Activated B cell treated with CpG ODN at 0.5 μM for 24 hours (primary cell): ENCODE measurements at regions of chr1 and their contacts with region 1.

Region 1: GRCh38 chr1:108746372-108747205 is at the start of gene STXBP3:
- DNase-seq: peak; percentile 99
- ATAC-seq: peak; percentile 92
- H3K4me3 Mint-ChIP-seq: peak within 1 kb of the TSS; percentile 99
- H3K27ac Mint-ChIP-seq: peak within 1 kb of the TSS; percentile 99
- H3K4me1 Mint-ChIP-seq: peaks cover 28% of the 10 kb centered on the region
- H3K27me3 Mint-ChIP-seq: no peaks in the 10 kb centered on the region
- CTCF ChIP-seq: peak; percentile 93
- total RNA-seq, gene STXBP3: 46.4 and 50.2 TPM in 2 replicates

Region 2: GRCh38 chr1:108199781-108200570 is 546.6 kb before region 1 on chr1 and contains the start of gene SLC25A24:
- CTCF ChIA-PET with region 1: no interaction called
- POLR2A ChIA-PET with region 1: no interaction called
- intact Hi-C with region 1: loop called (anchors 5 kb)
- DNase-seq: peak; percentile 85
- ATAC-seq: peak; percentile 94
- H3K4me3 Mint-ChIP-seq: peak within 1 kb of the TSS; percentile 93
- H3K27ac Mint-ChIP-seq: peak within 1 kb of the TSS; percentile 86
- H3K4me1 Mint-ChIP-seq: peaks cover 29% of the 10 kb centered on the region
- H3K27me3 Mint-ChIP-seq: no peaks in the 10 kb centered on the region
- CTCF ChIP-seq: no peak
- total RNA-seq, gene SLC25A24: 20.2 and 22.1 TPM in 2 replicates

Region 3: GRCh38 chr1:108877348-108878159 is 131.0 kb after region 1 on chr1:
- CTCF ChIA-PET with region 1: no interaction called
- POLR2A ChIA-PET with region 1: no interaction called
- intact Hi-C with region 1: loop called (anchors 1 kb)
- DNase-seq: no peak
- ATAC-seq: no peak
- H3K4me3 Mint-ChIP-seq: peak overlapping the region; percentile 97
- H3K27ac Mint-ChIP-seq: peak overlapping the region; percentile 85
- H3K4me1 Mint-ChIP-seq: peaks cover 13% of the 10 kb centered on the region
- H3K27me3 Mint-ChIP-seq: no peaks in the 10 kb centered on the region
- CTCF ChIP-seq: no peak

Region 4: GRCh38 chr1:108963052-108963686 is 216.6 kb after region 1 on chr1 and contains the start of gene CLCC1:
- CTCF ChIA-PET with region 1: no interaction called
- POLR2A ChIA-PET with region 1: no interaction called
- intact Hi-C with region 1: loop called (anchors 1 kb)
- DNase-seq: peak; percentile 84
- ATAC-seq: peak; percentile 94
- H3K4me3 Mint-ChIP-seq: peak within 1 kb of the TSS; percentile 88
- H3K27ac Mint-ChIP-seq: peak within 1 kb of the TSS; percentile 91
- H3K4me1 Mint-ChIP-seq: peaks cover 35% of the 10 kb centered on the region
- H3K27me3 Mint-ChIP-seq: no peaks in the 10 kb centered on the region
- CTCF ChIP-seq: no peak
- total RNA-seq, gene CLCC1: 19.5 and 28.3 TPM in 2 replicates

Region 5: GRCh38 chr1:109112652-109113285 is 366.2 kb after region 1 on chr1:
- CTCF ChIA-PET with region 1: no interaction called
- POLR2A ChIA-PET with region 1: no interaction called
- intact Hi-C with region 1: loop called (anchors 2 kb)
- DNase-seq: peak; percentile 83
- ATAC-seq: peak; percentile 75
- H3K4me3 Mint-ChIP-seq: peak overlapping the region; percentile 77
- H3K27ac Mint-ChIP-seq: peak overlapping the region; percentile 56
- H3K4me1 Mint-ChIP-seq: peaks cover 25% of the 10 kb centered on the region
- H3K27me3 Mint-ChIP-seq: peaks cover 27% of the 10 kb centered on the region
- CTCF ChIP-seq: peak; percentile 88